ENCODE measurements at regions of chr15 and their contacts with region 1.

Region 1: GRCh38 chr15:35444557-35445204 is 101.3 kb downstream of the DPH6 start:
- DNase-seq: peak; percentile 56
- H3K4me3 ChIP-seq: no peak overlapping the region; a peak in 1 of 4 replicates
- H3K27ac ChIP-seq: peak overlapping the region in 1 of 2 experiments; percentile 34; a peak in 2 of 4 replicates
- H3K4me1 ChIP-seq: no peaks in the 10 kb centered on the region; a peak in 2 of 4 replicates
- H3K27me3 ChIP-seq: no peaks in the 10 kb centered on the region
- CTCF ChIP-seq: peak; percentile 89
- EP300 ChIP-seq: no peak; a peak in 1 of 4 replicates
- RAD21 ChIP-seq: peak; percentile 93

Region 2: DNA sequence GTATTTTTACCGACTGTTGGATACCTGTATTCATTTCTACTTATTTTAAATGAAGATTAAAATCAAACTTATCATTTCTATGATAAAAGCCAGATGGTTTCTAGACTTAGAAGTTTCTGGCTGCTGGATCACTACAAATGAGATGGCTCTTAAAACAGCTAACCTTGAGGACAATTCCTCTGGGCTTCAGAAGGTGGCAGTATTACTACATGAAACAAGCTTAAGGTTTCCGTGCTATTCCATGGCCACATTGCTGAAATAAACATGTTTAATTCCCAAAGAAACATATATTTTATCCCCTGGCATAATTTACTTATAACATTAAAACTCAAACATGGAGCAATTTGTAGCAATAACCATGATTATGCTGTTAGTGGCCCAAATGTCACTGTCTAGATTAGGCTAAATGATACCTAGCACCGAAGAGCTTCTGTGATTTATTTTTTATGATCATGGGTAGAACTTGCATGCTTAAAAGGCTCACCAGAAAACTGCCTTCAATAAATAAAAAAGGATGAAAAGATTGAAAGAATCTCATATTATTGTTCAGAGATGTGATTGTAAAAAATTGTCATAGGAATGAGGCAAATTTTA is 155.6 kb before region 1 on chr15:
- CTCF ChIA-PET with region 1: interaction called, 128 read pairs
- POLR2A ChIA-PET with region 1: no interaction called
- DNase-seq: peak; percentile 58
- H3K4me3 ChIP-seq: no peak overlapping the region
- H3K27ac ChIP-seq: peak overlapping the region in 1 of 2 experiments; percentile 90; a peak in 2 of 4 replicates
- H3K4me1 ChIP-seq: peaks cover 13 to 36% of the 10 kb centered on the region in 2 experiments; a peak in 3 of 4 replicates
- H3K27me3 ChIP-seq: no peaks in the 10 kb centered on the region
- CTCF ChIP-seq: peak; percentile 91
- EP300 ChIP-seq: 0 out of 4 replicates have a peak, but pooled peaks of 1 of the 2 experiments have one; percentile 2
- RAD21 ChIP-seq: peak; percentile 97

Region 3: DNA sequence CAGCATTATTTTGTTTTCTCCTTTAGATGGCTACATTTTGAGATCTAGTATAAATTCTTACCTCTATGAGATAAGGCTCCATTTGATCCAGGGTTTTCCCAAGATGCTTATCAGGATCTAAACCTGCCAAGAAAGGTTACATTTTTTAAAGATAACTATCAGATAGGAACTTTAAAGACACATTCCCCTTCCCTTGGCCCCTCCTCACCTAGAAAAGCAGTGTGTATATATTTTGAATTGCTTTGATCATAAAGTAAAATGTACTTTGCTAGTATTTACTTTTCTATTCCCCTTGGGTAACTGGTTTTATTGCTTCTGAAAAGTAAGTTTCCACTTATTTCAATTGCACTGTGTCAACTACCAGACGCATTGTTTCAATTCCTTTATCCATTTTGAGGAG is 33.9 kb before region 1 on chr15:
- CTCF ChIA-PET with region 1: interaction called, 10 read pairs
- POLR2A ChIA-PET with region 1: no interaction called
- DNase-seq: no peak
- H3K4me3 ChIP-seq: no peak overlapping the region
- H3K27ac ChIP-seq: no peak overlapping the region
- H3K4me1 ChIP-seq: no peaks in the 10 kb centered on the region; a peak in 1 of 4 replicates
- H3K27me3 ChIP-seq: no peaks in the 10 kb centered on the region
- CTCF ChIP-seq: no peak
- EP300 ChIP-seq: no peak
- RAD21 ChIP-seq: no peak

Region 4: GRCh38 chr15:35455201-35455600 is 10.5 kb after region 1 on chr15:
- CTCF ChIA-PET with region 1: interaction called, 22 read pairs
- POLR2A ChIA-PET with region 1: no interaction called
- DNase-seq: no peak
- H3K4me3 ChIP-seq: no peak overlapping the region
- H3K27ac ChIP-seq: no peak overlapping the region
- H3K4me1 ChIP-seq: peaks cover 0 to 16% of the 10 kb centered on the region in 2 experiments; a peak in 2 of 4 replicates
- H3K27me3 ChIP-seq: no peaks in the 10 kb centered on the region
- CTCF ChIP-seq: no peak
- EP300 ChIP-seq: no peak
- RAD21 ChIP-seq: no peak

Region 5: DNA sequence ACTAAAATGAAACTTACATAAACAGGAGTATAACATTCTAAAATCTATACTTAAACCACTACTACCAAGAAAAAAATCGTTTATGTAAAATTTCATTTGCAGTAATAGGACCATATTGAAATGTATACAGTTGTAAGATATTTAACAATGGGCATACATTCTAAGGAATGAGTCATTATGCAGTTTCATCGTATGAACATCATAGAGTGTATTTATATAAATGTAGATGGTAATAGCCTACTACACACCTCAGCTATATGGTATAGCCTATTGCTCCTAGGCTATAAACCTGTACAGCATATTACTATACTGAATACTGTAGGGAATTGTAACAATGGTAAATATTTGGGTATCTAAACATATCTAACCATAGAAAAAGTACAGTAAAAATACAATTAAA is 21.8 kb after region 1 on chr15:
- CTCF ChIA-PET with region 1: interaction called, 21 read pairs
- POLR2A ChIA-PET with region 1: no interaction called
- DNase-seq: no peak
- H3K4me3 ChIP-seq: no peak overlapping the region
- H3K27ac ChIP-seq: no peak overlapping the region
- H3K4me1 ChIP-seq: no peaks in the 10 kb centered on the region
- H3K27me3 ChIP-seq: no peaks in the 10 kb centered on the region
- CTCF ChIP-seq: no peak
- EP300 ChIP-seq: no peak
- RAD21 ChIP-seq: no peak

Region 6: GRCh38 chr15:35843498-35843897 is 398.8 kb after region 1 on chr15:
- CTCF ChIA-PET with region 1: no interaction called
- POLR2A ChIA-PET with region 1: no interaction called
- DNase-seq: no peak
- H3K4me3 ChIP-seq: no peak overlapping the region
- H3K27ac ChIP-seq: peak overlapping the region in 1 of 2 experiments; percentile 62; a peak in 2 of 4 replicates
- H3K4me1 ChIP-seq: peaks cover 0 to 18% of the 10 kb centered on the region in 2 experiments; a peak in 2 of 4 replicates
- H3K27me3 ChIP-seq: no peaks in the 10 kb centered on the region
- CTCF ChIP-seq: no peak
- EP300 ChIP-seq: no peak; a peak in 1 of 4 replicates
- RAD21 ChIP-seq: no peak

Measured in SK-N-SH (cell line).